OCI-LY7 (cell line): ENCODE measurements at regions of chr1 and their contacts with region 1.

Region 1: DNA sequence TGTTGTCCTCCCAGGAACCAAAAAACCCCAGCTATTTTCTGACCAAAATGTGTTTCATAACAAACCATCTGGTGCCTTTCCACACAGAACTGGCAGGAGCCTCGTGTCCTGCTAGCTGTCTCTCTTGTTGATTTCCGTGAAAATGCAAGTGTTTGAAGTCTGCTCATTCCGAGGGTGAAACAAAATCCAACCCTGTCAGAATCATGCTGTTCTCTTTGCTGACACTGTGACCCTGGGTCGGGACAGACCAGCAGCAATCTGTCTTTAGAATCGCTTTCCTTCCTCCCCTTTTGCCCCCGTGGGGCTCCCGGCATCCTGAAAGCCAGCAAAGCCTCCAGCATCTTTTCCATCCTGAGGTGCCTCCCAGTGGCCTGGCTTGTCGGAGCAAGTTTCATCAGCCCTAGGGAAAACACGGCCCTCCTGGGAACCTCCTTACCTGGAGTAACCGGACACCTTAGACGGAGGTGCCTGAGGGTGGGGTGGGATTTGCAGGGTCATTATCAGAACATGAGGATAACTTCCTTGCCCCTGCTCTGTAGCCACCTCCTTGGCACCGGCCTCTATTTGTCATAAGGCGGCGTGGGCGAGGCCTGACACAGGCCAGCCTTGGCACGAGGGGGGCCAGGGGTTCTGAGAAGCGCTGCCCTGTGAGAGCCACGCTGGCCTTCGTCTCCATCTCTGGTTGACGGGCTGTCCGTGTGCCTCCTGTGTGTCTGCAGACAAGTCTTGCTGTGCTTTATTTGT is 24.9 kb downstream of the LDLRAP1 start:
- DNase-seq: no peak
- H3K4me3 ChIP-seq: no peak overlapping the region
- H3K27ac ChIP-seq: no peak overlapping the region
- H3K4me1 ChIP-seq: peaks cover 56% of the 10 kb centered on the region
- CTCF ChIP-seq: no peak

Region 2: GRCh38 chr1:24765308-24765988 is 802.8 kb before region 1 on chr1:
- CTCF ChIA-PET with region 1: no interaction called
- POLR2A ChIA-PET with region 1: no interaction called
- intact Hi-C with region 1: no loop called
- DNase-seq: no peak
- H3K4me3 ChIP-seq: no peak overlapping the region
- H3K27ac ChIP-seq: no peak overlapping the region
- H3K4me1 ChIP-seq: peaks cover 28% of the 10 kb centered on the region
- CTCF ChIP-seq: no peak

Region 3: GRCh38 chr1:25487628-25488027 is 80.6 kb before region 1 on chr1:
- CTCF ChIA-PET with region 1: no interaction called
- POLR2A ChIA-PET with region 1: no interaction called
- intact Hi-C with region 1: no loop called
- DNase-seq: peak; percentile 53
- H3K4me3 ChIP-seq: no peak overlapping the region
- H3K27ac ChIP-seq: no peak overlapping the region
- H3K4me1 ChIP-seq: peaks cover 6% of the 10 kb centered on the region
- CTCF ChIP-seq: peak; percentile 90

Region 4: DNA sequence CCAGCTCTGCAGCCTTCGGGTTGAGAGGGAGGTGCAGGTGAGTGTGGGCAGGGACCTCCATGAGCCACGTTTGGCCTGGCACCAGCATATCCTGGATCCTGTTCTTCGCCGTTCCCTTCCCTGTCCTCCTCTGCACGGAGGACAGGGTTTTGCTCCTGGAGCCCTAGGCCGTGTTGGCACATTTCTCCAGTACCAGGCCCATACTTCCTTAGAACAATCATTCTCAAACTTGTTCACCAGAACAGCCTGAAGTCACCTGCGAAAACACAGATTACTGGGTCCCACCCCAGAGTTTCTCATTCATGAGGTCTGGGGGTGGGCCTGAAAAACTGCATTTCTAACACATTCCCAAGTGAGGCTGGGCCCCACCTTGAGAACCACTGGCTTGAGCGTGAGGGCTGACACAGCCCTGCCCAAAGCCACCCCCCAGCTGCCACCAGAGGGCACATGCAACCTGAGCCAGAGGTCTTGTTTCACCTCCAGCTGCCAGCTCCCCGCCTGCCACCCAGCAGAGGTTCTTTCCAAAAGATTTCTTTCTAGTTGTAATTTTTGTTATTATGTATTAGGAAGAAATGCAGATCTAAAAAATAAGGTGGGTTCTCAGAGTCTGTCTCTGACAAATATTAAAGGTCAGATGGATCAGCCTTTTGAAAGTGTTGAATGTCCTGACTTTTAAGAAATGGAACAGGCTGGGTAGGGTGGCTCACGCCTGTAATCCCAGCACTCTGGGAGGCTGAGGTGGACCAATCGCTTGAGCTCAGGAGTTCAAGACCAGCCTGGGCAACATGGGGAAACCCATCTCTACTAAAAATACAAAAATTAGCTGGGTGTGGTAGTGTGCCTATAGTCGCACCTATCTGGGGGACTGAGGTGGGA is 64.5 kb before region 1 on chr1:
- CTCF ChIA-PET with region 1: interaction called, 3 read pairs
- POLR2A ChIA-PET with region 1: no interaction called
- intact Hi-C with region 1: loop called (anchors 1 kb)
- DNase-seq: peak; percentile 72
- H3K4me3 ChIP-seq: no peak overlapping the region
- H3K27ac ChIP-seq: no peak overlapping the region
- H3K4me1 ChIP-seq: peaks cover 15% of the 10 kb centered on the region
- CTCF ChIP-seq: peak; percentile 91

Region 5: DNA sequence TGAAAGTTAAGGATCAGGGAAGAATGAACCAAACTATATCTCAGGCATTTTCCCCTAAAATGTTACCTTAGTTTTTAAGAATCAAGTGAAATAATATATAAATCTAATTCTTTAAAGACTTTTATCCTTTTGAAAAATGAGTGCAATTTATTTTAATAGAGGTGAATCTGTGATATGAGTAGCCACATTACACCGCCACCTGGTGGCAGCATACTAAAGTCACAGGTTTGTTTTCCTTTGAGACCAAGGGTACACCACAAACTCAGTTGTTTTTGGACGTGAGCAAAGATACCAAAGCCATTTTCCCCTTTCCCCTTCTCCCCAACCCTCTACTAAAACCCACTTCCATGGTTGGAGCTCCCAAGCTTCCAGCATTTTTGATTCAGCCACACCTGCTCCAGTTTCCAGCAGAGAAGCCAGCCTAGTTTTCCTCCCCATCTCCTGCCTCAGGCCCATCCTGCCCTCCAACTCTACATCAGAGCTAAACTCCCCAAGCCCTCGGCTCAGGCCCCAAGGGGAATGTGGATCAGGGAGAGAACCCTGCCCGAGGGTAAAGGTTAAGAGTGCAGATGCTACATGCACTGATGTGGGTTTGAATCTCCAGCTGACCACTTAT is 47.7 kb before region 1 on chr1:
- CTCF ChIA-PET with region 1: interaction called, 5 read pairs
- POLR2A ChIA-PET with region 1: interaction called, 3 read pairs
- intact Hi-C with region 1: loop called (anchors 1 kb)
- DNase-seq: peak; percentile 80
- H3K4me3 ChIP-seq: no peak overlapping the region
- H3K27ac ChIP-seq: no peak overlapping the region
- H3K4me1 ChIP-seq: peaks cover 4% of the 10 kb centered on the region
- CTCF ChIP-seq: peak; percentile 95

Region 6: DNA sequence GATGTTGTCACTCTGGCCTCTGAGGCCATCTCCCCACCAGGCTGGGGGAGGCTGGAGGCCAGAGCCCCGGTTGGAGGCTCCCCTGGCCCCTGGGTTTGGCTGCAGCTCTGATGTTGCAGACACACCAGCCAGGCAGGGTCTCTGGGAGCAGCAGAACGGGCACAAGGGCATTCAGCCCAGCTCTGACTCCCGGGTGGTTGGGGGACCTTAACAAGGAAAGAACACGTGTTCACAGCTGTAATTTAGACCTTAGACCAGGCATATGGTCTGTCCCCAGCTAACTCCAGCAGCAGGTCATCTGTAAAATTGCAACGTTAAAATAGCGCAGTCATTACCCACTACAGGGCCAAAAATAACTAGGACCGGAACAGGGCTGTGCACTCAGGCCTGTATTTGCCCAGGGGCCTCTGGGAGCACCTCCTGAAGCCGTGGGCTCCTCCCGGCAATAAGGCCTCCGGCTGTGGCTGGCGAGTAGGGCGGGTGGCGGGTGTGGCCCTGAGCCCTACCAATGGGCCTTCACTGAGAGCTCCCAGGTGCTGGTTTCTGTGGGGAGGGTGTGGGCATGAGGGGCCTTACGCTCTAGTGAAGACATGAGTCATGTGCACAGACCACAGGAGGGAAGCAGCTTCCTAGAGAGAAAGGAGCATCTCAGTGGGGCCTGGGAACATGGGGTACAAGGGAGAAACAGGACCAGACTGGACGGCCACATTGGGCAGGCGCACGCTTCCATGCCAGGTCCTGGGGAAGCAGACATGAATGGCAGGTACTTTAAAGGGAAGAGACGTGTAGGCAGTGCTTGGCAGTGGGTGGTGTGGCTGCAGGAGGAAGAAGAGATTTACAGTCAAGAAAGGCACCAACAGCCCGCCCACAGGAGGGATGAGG is 18.7 kb before region 1 on chr1:
- CTCF ChIA-PET with region 1: interaction called, 23 read pairs
- POLR2A ChIA-PET with region 1: interaction called, 51 read pairs
- intact Hi-C with region 1: loop called (anchors 1 kb)
- DNase-seq: peak; percentile 95
- H3K4me3 ChIP-seq: peak overlapping the region; percentile 38
- H3K27ac ChIP-seq: peak overlapping the region; percentile 90
- H3K4me1 ChIP-seq: peaks cover 75% of the 10 kb centered on the region
- CTCF ChIP-seq: no peak

Region 7: GRCh38 chr1:25810341-25811299 is 242.4 kb after region 1 on chr1:
- CTCF ChIA-PET with region 1: interaction called, 3 read pairs
- POLR2A ChIA-PET with region 1: no interaction called
- intact Hi-C with region 1: loop called (anchors 1 kb)
- DNase-seq: peak; percentile 76
- H3K4me3 ChIP-seq: no peak overlapping the region
- H3K27ac ChIP-seq: peak overlapping the region; percentile 43
- H3K4me1 ChIP-seq: peaks cover 21% of the 10 kb centered on the region
- CTCF ChIP-seq: peak; percentile 94

Region 8: DNA sequence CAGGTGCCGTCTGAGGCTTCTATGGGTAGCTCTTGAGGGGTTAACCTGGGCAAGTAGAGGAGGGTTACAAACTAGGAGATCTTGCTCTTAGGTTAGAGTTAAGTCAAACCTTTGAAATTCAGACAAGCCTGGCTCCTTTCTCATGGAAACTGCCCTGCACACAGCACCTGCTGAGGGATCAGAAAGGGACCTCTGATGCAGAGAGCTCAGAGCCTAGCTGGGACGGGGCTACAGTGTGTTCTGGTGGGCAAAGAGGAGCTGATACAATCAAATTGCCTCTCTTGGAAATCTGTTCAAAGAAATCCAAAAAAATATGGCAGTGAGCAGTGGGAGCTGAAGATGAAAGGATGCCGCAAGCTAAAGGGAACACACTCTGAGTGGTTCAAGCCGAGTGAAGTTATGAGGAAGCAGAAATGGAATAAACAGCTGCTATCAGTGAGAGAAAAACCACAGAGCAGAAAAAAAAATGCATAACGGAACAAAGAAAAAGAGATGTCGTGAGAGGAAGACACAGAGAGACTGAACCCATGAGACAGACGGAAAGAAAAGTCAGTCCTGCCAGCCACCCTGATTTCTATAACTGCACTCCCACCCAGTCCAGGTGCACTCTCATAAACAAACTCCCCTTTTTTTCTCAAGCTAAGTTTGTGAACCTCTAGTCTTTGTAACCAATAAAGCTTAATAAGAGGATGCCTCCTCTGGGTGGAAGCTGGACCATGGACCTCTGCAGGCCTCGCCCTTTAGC is 403.0 kb after region 1 on chr1:
- CTCF ChIA-PET with region 1: no interaction called
- POLR2A ChIA-PET with region 1: no interaction called
- intact Hi-C with region 1: no loop called
- DNase-seq: peak; percentile 69
- H3K4me3 ChIP-seq: peak overlapping the region; percentile 3
- H3K27ac ChIP-seq: peak overlapping the region; percentile 71
- H3K4me1 ChIP-seq: peaks cover 17% of the 10 kb centered on the region
- CTCF ChIP-seq: no peak